ENCODE measurements at regions of chr17 and their contacts with region 1.

Region 1: DNA sequence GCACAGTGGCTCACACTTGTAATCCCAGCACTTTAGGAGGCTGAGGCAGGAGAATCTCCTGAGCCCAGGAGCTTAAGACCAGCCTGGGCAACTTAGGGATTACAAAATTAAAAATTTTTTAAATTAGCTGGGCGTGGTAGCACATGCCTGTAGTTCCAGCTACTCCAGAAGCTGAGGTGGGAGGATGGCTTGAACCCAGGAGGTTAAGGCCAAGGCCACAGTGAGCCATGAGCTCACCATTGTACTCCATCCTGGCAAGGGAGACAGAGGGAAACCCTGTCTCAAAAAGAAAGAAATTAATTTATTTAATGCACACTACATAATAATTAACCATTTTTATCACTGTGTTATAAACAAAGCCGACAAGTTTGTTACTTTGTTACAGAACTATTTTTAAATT is 131.1 kb upstream of the TMEM97 start:
- DNase-seq: no peak
- H3K4me3 ChIP-seq: no peak overlapping the region
- H3K27ac ChIP-seq: no peak overlapping the region
- H3K4me1 ChIP-seq: no peaks in the 10 kb centered on the region
- H3K27me3 ChIP-seq: no peaks in the 10 kb centered on the region
- CTCF ChIP-seq: no peak

Region 2: GRCh38 chr17:27929990-27930389 is 257.9 kb before region 1 on chr17:
- CTCF ChIA-PET with region 1: no interaction called
- POLR2A ChIA-PET with region 1: interaction called, 32 read pairs
- intact Hi-C with region 1: no loop called
- DNase-seq: no peak
- H3K4me3 ChIP-seq: no peak overlapping the region
- H3K27ac ChIP-seq: no peak overlapping the region
- H3K4me1 ChIP-seq: no peaks in the 10 kb centered on the region
- H3K27me3 ChIP-seq: peaks cover 42% of the 10 kb centered on the region
- CTCF ChIP-seq: no peak

Region 3: DNA sequence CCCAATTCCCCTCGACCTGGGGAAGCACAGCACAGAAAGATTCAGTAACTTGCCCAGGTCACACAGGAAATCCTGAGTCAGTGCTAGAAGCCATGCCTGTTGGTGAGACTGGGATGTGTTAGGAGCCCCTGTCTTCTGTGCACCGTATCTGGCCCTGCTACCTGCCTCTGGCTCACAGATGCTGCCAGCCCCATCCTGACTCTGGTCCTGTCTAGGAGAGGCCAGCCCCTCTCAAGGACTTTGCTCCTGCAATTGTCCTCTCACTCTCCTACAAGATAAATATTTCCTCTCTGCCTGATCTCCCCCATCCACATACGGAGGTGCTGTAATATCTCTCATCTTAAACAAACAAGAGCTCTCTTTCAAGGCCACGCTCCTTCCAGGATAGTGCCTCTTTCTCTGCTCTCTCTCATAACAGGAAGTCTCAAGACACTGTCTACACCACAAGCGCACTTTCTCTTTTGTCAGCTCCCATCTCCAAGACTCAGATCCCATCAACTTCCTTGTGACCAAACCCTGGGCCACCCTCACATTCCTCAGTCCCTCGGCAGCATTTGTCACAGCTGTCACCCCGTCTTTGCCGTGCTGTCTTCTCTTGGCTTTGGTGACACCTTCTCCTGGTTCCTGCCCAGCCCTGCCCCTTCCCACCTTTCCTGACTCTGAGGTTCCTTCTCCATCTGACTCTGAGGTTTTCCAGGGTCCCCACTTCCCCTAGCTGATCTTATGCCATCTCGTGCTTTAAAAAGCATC is 287.4 kb after region 1 on chr17:
- CTCF ChIA-PET with region 1: no interaction called
- POLR2A ChIA-PET with region 1: no interaction called
- intact Hi-C with region 1: no loop called
- DNase-seq: peak in 1 of 2 experiments; percentile 57
- H3K4me3 ChIP-seq: no peak overlapping the region
- H3K27ac ChIP-seq: no peak overlapping the region
- H3K4me1 ChIP-seq: peaks cover 20% of the 10 kb centered on the region
- H3K27me3 ChIP-seq: no peaks in the 10 kb centered on the region
- CTCF ChIP-seq: no peak

Measured in PC-9 (cell line).